ENCODE measurements at regions of chr7 and their contacts with region 1.

Region 1: DNA sequence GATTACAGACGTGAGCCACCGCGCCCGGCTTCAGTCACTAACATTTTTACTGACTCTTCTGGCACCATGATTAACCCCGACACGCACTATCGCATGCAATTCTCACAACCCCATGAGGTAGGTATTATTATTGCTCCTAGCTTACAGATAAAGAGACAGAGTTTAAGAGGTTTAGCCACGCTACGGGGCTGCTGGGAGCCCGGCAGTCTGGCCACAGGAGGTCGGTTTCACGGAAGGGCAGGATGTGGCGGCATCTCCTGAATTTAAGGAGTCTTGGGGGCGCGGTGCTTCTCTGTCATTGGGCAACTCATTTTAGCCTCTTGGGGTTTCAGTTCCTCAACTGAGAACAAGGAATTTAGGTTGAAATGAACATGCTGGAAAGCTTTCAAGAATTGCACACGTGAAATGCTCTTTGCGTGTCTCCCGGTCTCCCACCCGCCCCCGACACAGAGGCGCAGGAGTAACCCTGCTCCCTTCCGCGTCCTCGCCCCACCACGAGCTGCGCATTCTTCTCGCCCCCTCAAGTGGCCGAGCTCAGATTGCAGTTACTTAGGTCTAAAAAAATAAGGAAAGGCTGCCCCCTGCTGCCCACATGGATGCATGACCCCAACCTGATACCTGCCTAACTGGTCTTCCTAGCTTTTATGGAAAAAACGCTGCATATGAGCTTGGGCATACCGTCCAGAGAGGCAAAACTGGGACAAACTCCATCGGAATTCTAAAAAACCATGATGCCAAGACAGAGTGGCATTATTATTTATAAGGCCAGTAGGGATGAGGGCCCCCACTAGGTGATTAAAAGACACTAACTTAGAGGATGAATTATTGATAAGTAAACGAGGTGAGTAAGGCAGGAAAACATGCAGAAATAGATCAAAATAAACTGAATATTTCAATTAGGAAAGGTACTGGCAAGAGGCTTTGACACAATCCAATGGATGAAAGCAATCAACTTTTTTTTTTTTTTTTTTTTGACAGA is 12.4 kb downstream of the PRSS2 start:
- DNase-seq: peak; percentile 81 to 87
- ATAC-seq: peak; percentile 71 to 92 (median 90)
- H3K4me3 ChIP-seq: peak overlapping the region in 9 of 10 donors; percentile 4 to 48 (median 38)
- H3K27ac ChIP-seq: no peak overlapping the region
- H3K4me1 ChIP-seq: peaks cover 0 to 8% (median 4%) of the 10 kb centered on the region in 9 donors
- H3K27me3 ChIP-seq: peaks cover 0 to 21% (median 0%) of the 10 kb centered on the region in 7 donors
- CTCF ChIP-seq: peak; percentile 76 to 93 (median 88)

Region 2: GRCh38 chr7:142587578-142588191 is 195.5 kb before region 1 on chr7:
- intact Hi-C with region 1: no loop called
- DNase-seq: no peak
- ATAC-seq: peak in 2 of 8 donors; percentile 42 to 47
- H3K4me3 ChIP-seq: no peak overlapping the region
- H3K27ac ChIP-seq: no peak overlapping the region
- H3K4me1 ChIP-seq: peaks cover 0 to 5% (median 0%) of the 10 kb centered on the region in 9 donors
- H3K27me3 ChIP-seq: peaks cover 0 to 4% (median 0%) of the 10 kb centered on the region in 7 donors
- CTCF ChIP-seq: peak in 7 of 9 donors; percentile 15 to 71 (median 35)

Region 3: DNA sequence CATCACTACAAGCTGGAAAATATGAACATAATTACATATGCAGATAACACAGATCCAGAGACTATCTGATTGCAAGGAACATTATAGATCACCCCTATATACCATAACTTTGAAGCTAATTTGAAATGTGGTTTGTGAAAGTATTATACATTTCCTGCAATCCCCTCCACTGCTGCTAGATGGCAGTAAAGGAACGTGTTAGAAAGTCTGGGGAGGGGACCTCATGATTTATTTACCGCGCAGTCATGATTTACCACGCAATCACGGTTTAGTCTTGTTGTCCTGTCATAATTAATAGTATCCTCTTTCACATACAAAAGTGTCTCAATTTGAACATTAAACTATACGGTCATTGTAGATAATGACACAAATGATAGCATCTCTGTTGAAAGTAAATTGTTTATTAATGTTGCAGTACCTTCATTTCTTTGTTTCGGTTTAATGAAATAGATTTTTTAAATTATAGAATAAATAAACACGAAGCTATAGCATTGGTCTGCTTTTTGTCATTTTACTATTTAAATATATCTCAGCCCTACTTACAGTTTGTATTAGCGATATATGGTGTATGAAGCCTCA is 179.3 kb before region 1 on chr7:
- intact Hi-C with region 1: loop called in 2 of 10 experiments (anchors 10 kb)
- DNase-seq: peak in 1 of 2 donors; percentile 14
- ATAC-seq: no peak
- H3K4me3 ChIP-seq: no peak overlapping the region
- H3K27ac ChIP-seq: no peak overlapping the region
- H3K4me1 ChIP-seq: no peaks in the 10 kb centered on the region
- H3K27me3 ChIP-seq: peaks cover 0 to 45% (median 9%) of the 10 kb centered on the region in 7 donors
- CTCF ChIP-seq: peak; percentile 46 to 86 (median 77)

Region 4: DNA sequence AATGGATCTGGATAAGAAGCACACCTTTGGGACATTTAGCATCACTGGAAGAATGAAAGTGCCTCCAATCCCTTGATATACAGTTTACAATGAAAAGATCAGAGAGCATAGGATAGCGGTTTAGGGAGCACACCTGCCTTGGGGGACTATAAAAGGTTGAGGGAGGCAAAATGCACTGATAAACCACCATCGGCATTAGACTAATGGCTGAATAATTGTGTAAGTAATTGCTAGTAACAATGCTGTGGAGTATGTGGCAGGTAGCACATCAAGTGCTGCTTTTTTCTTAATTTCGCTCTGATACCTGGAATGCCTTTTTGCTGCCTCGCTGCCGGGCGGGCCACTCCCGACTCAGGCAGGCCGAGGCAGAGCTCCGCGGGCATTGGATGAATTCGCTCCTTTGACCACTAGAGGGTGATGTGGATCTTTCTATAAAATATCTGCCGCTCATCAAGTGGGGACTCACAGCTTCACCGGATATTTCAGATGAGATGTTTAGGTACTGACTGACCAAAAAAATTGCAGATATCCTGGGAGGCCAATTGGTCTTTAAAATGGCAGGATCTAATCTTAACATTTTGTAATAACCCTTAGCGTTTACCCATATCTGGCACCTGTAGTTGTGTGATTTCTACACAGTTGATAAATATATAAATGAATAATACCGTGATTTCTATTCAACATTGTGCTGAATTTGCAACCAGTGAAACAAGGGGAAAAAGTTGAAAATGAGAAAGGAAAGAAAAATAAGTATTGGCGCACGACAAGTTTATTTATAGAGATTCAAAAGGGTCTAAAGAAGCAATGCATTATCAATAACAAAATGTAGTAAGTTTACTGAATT is 150.7 kb before region 1 on chr7:
- intact Hi-C with region 1: loop called (anchors 1 to 10 kb)
- DNase-seq: peak; percentile 14 to 18
- ATAC-seq: peak in 6 of 8 donors; percentile 47 to 83 (median 61)
- H3K4me3 ChIP-seq: no peak overlapping the region
- H3K27ac ChIP-seq: no peak overlapping the region
- H3K4me1 ChIP-seq: no peaks in the 10 kb centered on the region
- H3K27me3 ChIP-seq: peaks cover 0 to 84% (median 33%) of the 10 kb centered on the region in 7 donors
- CTCF ChIP-seq: peak; percentile 41 to 80 (median 77)

Region 5: GRCh38 chr7:142669074-142669654 is 114.0 kb before region 1 on chr7:
- intact Hi-C with region 1: loop called in 2 of 10 experiments (anchors 5 to 10 kb)
- DNase-seq: no peak
- ATAC-seq: no peak
- H3K4me3 ChIP-seq: no peak overlapping the region
- H3K27ac ChIP-seq: no peak overlapping the region
- H3K4me1 ChIP-seq: no peaks in the 10 kb centered on the region
- H3K27me3 ChIP-seq: no peaks in the 10 kb centered on the region
- CTCF ChIP-seq: peak in 7 of 9 donors; percentile 35 to 49 (median 37)

Region 6: GRCh38 chr7:142689439-142690120 is 93.6 kb before region 1 on chr7:
- intact Hi-C with region 1: loop called in 2 of 10 experiments (anchors 10 kb)
- DNase-seq: no peak
- ATAC-seq: no peak
- H3K4me3 ChIP-seq: no peak overlapping the region
- H3K27ac ChIP-seq: no peak overlapping the region
- H3K4me1 ChIP-seq: no peaks in the 10 kb centered on the region
- H3K27me3 ChIP-seq: no peaks in the 10 kb centered on the region
- CTCF ChIP-seq: peak in 5 of 9 donors; percentile 3 to 31 (median 16)

Region 7: GRCh38 chr7:142711746-142712619 is 71.2 kb before region 1 on chr7:
- intact Hi-C with region 1: loop called (anchors 1 to 10 kb)
- DNase-seq: no peak
- ATAC-seq: no peak
- H3K4me3 ChIP-seq: no peak overlapping the region
- H3K27ac ChIP-seq: peak overlapping the region in 1 of 10 donors; percentile 57
- H3K4me1 ChIP-seq: no peaks in the 10 kb centered on the region
- H3K27me3 ChIP-seq: peaks cover 0 to 44% (median 0%) of the 10 kb centered on the region in 7 donors
- CTCF ChIP-seq: peak; percentile 13 to 70 (median 56)

Measured in heart right ventricle (tissue), 16 donors.